PC-9 (cell line): ENCODE measurements at regions of chr3 and their contacts with region 1.

Region 1: DNA sequence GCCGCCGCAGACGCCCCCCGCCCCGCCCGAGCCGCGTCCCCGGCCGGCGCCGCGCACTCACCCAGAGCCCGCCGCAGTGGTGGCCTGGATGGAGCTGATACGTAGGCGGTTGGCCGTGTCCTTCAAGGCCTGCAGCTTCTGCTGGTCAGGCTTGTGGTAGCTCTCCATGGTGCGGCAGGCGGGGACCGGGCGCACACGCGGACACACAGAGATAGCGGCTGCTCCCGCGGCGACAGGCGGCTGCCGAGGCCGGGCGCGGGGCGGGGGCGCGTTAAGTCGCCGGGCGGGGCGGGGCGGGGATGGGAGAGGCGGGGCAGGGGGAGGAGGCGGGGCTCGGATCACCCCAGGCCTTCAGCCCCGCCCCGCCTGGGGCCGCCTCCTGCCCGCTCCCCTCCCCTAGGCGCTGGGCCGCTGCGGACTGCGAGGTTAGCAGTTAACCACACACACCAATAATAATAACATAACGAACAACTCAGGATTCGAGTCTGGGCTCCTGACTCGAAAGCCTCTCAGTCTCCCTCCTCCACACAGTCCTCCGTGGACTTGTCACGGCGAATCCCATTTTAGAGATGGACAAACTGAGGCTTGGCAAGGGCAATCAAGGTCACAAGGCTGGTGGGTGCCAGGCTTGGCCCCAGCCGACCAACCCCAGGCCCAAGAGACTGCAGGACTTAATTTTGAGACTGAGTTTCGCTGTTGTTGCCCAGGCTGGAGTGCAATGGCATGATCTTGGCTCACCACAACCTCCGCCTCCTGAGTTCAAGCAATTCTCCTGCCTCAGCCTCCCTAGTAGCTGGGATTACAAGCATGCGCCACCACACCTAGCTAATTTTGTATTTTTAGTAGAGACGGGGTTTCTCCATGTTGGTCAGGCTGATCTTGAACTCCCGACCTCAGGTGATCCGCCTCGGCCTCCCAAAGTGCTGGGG is at the start of gene TKT:
- DNase-seq: peak; percentile 61 to 82
- H3K4me3 ChIP-seq: peak within 1 kb of the TSS; percentile 98
- H3K27ac ChIP-seq: peak within 1 kb of the TSS; percentile 76
- H3K4me1 ChIP-seq: peaks cover 49% of the 10 kb centered on the region
- H3K27me3 ChIP-seq: no peaks in the 10 kb centered on the region
- CTCF ChIP-seq: no peak
- total RNA-seq, gene TKT: 1,726 and 2,016 TPM in 2 replicates

Region 2: DNA sequence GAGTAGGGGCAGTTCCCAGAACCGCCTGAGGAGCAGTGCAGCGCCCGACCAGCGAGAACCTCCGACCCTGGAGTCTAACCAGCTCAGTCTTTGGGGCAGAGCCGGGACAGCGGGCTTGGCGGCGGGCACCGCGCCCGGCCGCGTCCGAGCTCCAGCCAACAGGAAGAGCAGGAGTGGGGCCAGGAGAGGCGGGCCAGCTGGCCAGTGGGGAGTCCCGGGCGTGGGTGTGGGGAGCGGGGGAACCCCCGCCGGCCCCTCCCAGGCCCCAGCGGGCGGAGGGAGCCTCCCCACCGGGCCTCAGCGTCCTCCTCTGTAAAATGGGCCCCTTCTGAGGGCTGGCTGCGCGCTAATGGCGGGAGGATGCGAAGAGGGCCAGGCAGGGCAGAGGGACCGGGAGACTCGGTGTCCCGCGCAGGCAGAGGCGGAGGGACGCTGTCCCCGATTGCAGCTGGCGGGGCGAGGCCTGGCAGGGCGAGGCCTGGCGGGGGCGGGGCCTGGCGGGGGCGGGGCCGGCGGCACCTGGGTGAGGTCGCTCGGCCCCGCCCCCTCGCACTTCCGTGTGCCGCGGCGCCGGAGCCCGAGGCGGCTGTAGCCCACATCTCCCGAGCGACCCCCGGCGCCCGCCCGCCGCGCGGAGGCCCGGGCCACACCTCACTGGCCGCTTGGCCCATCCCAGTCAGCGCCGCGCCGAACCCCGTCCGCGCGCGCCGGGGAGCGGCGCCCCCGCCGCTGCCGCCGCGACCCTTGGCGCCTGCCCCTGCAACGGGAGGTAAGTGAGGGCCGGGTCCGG is 95.2 kb before region 1 on chr3 and contains the start of gene PRKCD:
- CTCF ChIA-PET with region 1: no interaction called
- POLR2A ChIA-PET with region 1: interaction called, 3 read pairs
- intact Hi-C with region 1: loop called (anchors 5 kb)
- DNase-seq: peak; percentile 60 to 84
- H3K4me3 ChIP-seq: peak within 1 kb of the TSS; percentile 84
- H3K27ac ChIP-seq: no peak within 1 kb of the TSS
- H3K4me1 ChIP-seq: peaks cover 57% of the 10 kb centered on the region
- H3K27me3 ChIP-seq: no peaks in the 10 kb centered on the region
- CTCF ChIP-seq: 0 out of 2 replicates have a peak, but pooled peaks have one; percentile 13
- total RNA-seq, gene PRKCD: 30.1 and 34.3 TPM in 2 replicates

Region 3: DNA sequence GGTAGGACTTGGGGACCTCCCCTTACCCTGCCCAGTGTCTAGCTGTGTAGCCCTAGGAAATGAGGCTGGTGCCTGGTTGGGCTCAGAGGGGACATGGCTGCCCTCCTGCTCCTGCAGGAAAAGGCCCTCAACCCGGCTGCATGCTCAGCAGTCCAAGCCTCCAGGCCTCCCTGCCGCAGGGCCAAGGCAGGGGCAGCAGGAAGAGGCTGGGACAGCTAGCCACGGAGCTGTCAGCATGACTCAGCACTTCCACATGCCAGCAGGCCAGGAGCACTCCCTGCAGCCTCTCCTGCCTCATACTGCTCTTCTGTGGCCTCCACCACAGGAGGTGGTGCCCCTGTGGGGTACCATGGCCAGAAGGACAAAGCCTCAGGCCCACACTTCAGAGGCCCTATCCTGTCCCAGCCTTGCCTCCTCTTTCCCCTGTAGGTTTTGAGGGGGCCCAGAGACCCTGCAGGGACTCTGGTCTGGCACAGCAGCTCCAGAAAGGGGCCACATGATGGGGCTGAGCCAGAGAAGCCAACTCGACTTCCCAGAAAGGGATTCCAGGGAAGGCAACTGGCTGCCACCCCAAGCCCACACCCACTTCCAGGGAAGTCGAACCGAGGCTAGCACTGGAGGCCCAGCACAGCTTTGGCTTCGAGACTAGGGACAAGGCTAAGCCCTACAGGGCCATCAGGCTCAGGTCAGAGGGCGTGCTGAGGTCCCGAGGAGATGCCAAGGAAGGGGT is 19.8 kb before region 1 on chr3:
- CTCF ChIA-PET with region 1: no interaction called
- POLR2A ChIA-PET with region 1: no interaction called
- intact Hi-C with region 1: loop called (anchors 2 kb)
- DNase-seq: peak; percentile 72 to 75
- H3K4me3 ChIP-seq: no peak overlapping the region
- H3K27ac ChIP-seq: peak overlapping the region; percentile 95
- H3K4me1 ChIP-seq: peaks cover 60% of the 10 kb centered on the region
- H3K27me3 ChIP-seq: no peaks in the 10 kb centered on the region
- CTCF ChIP-seq: no peak

Region 4: DNA sequence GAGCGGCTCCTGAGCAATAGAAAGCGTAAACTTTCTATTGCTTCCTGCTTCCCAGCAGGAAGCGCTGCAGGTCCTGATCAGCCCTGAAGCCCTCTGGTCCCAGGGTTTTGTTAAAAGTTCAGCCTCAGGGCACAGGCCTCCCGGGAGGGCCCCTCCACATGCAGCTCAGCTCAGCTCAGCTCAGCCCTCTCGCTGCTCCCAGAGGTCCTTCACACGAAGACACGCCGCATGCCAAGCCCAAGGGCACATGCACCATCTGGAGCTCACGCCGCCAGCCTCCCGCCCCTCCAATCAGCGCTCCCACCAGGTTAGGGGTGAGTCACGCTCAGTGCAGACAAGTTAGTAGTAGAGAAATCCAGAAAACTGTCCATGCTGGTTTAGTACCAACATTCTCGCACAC is 12.9 kb before region 1 on chr3:
- CTCF ChIA-PET with region 1: no interaction called
- POLR2A ChIA-PET with region 1: interaction called, 16 read pairs
- intact Hi-C with region 1: loop called (anchors 2 kb)
- DNase-seq: no peak
- H3K4me3 ChIP-seq: no peak overlapping the region
- H3K27ac ChIP-seq: peak overlapping the region; percentile 95
- H3K4me1 ChIP-seq: peaks cover 95% of the 10 kb centered on the region
- H3K27me3 ChIP-seq: no peaks in the 10 kb centered on the region
- CTCF ChIP-seq: no peak

Region 5: GRCh38 chr3:53269888-53270880 is 14.1 kb after region 1 on chr3:
- CTCF ChIA-PET with region 1: interaction called, 3 read pairs
- POLR2A ChIA-PET with region 1: interaction called, 17 read pairs
- intact Hi-C with region 1: loop called (anchors 1 kb)
- DNase-seq: peak; percentile 98 to 99
- H3K4me3 ChIP-seq: peak overlapping the region; percentile 42; the same call in 1 of the 2 replicates
- H3K27ac ChIP-seq: peak overlapping the region; percentile 97
- H3K4me1 ChIP-seq: peaks cover 71% of the 10 kb centered on the region
- H3K27me3 ChIP-seq: no peaks in the 10 kb centered on the region
- CTCF ChIP-seq: no peak

Region 6: GRCh38 chr3:54251705-54252104 is 995.7 kb after region 1 on chr3:
- CTCF ChIA-PET with region 1: no interaction called
- POLR2A ChIA-PET with region 1: no interaction called
- intact Hi-C with region 1: no loop called
- DNase-seq: no peak
- H3K4me3 ChIP-seq: no peak overlapping the region
- H3K27ac ChIP-seq: no peak overlapping the region
- H3K4me1 ChIP-seq: no peaks in the 10 kb centered on the region
- H3K27me3 ChIP-seq: peaks cover 26% of the 10 kb centered on the region
- CTCF ChIP-seq: no peak